ENCODE measurements at regions of chr11 and their contacts with region 1.

Region 1: GRCh38 chr11:13883042-13883441 is 79.5 kb upstream of the SPON1 start:
- DNase-seq: peak; percentile 88
- H3K4me3 ChIP-seq: no peak overlapping the region
- H3K27ac ChIP-seq: no peak overlapping the region
- H3K4me1 ChIP-seq: peaks cover 45% of the 10 kb centered on the region
- CTCF ChIP-seq: no peak

Region 2: DNA sequence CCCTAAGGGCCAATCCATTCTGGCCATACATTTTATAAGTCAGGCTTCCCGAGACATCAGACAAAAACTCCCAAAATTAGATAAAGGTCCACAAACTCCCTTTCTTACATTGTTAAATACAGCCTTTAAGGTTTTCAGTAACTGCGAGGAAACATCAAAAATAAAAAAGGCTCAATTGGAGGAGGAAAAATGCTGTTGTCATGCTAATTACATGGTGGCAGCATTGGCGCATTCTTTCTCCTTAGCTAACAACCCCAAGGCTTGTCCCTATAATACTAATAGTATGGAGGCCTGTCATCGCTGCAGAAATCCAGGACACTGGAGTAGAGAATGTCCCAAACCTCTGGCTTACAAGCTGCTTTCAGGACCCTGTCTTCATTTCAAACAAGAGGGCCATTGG is 411.0 kb before region 1 on chr11:
- CTCF ChIA-PET with region 1: no interaction called
- POLR2A ChIA-PET with region 1: no interaction called
- intact Hi-C with region 1: no loop called
- DNase-seq: no peak
- H3K4me3 ChIP-seq: no peak overlapping the region
- H3K27ac ChIP-seq: no peak overlapping the region
- H3K4me1 ChIP-seq: no peaks in the 10 kb centered on the region
- CTCF ChIP-seq: no peak

Region 3: GRCh38 chr11:13896175-13896980 is 13.3 kb after region 1 on chr11:
- CTCF ChIA-PET with region 1: interaction called, 3 read pairs
- POLR2A ChIA-PET with region 1: interaction called, 10 read pairs
- intact Hi-C with region 1: no loop called
- DNase-seq: no peak
- H3K4me3 ChIP-seq: no peak overlapping the region
- H3K27ac ChIP-seq: peak overlapping the region; percentile 92
- H3K4me1 ChIP-seq: peaks cover 70% of the 10 kb centered on the region
- CTCF ChIP-seq: no peak